GM12878 (cell line): ENCODE measurements at regions of chr5 and their contacts with region 1.

Region 1: GRCh38 chr5:57650360-57651069 is 167.9 kb upstream of the ACTBL2 start:
- DNase-seq: peak; percentile 16
- ATAC-seq: peak; percentile 93
- H3K4me3 ChIP-seq: no peak overlapping the region
- H3K27ac ChIP-seq: no peak overlapping the region
- H3K4me1 ChIP-seq: no peaks in the 10 kb centered on the region
- H3K27me3 ChIP-seq: no peaks in the 10 kb centered on the region
- CTCF ChIP-seq: peak; percentile 71 to 77 (median 75)
- EP300 ChIP-seq: no peak
- POLR2A ChIP-seq: no peak
- RAD21 ChIP-seq: peak; percentile 59

Region 2: DNA sequence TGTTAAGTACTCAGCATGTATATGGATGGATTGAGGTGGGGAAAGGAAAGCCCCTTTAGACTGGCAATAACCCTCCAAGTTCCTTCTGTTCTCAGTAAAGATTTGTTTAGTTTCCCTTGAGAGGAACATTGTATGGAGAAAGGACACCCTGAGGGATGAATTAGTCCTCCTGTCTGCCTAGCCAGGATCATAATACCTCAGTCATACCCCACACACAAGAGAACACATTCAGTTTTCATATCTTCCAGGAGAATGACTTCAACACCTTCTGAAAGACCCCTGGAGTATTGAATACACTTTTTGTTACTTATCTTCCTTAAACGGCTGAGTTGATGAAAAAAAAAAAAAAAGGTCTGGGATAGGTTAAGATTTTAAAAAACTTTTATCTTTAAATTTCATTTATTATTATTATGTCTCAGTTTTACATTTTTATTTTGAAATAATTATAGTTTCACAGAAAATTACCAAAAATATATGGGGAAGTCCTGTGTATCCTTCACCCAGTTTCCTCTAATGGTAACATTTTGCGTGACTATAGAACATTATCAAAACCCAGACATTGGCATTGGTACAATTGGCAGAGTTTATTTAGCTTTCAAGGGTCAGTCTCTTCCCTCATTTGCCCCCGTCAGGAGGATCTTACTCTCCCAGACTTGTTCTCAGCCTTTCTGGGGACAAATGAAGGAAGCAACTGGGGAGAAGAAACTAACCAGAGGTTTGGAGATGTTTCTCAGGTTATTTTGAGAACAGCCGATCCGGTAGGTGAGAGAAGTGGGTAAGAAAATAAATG is 255.9 kb before region 1 on chr5:
- CTCF ChIA-PET with region 1: no interaction called
- POLR2A ChIA-PET with region 1: no interaction called
- RAD21 ChIA-PET with region 1: no interaction called
- SMC1A ChIA-PET with region 1: no interaction called
- in situ Hi-C with region 1: no loop called
- intact Hi-C with region 1: no loop called
- DNase-seq: no peak
- ATAC-seq: no peak
- H3K4me3 ChIP-seq: no peak overlapping the region
- H3K27ac ChIP-seq: no peak overlapping the region
- H3K4me1 ChIP-seq: no peaks in the 10 kb centered on the region
- H3K27me3 ChIP-seq: no peaks in the 10 kb centered on the region
- CTCF ChIP-seq: no peak
- EP300 ChIP-seq: no peak
- POLR2A ChIP-seq: no peak
- RAD21 ChIP-seq: no peak

Region 3: GRCh38 chr5:57635146-57635777 is 15.3 kb before region 1 on chr5:
- CTCF ChIA-PET with region 1: interaction called, 12 read pairs
- POLR2A ChIA-PET with region 1: no interaction called
- RAD21 ChIA-PET with region 1: no interaction called
- SMC1A ChIA-PET with region 1: interaction called, 4 read pairs
- in situ Hi-C with region 1: no loop called
- intact Hi-C with region 1: no loop called
- DNase-seq: no peak
- ATAC-seq: no peak
- H3K4me3 ChIP-seq: no peak overlapping the region
- H3K27ac ChIP-seq: no peak overlapping the region
- H3K4me1 ChIP-seq: no peaks in the 10 kb centered on the region
- H3K27me3 ChIP-seq: no peaks in the 10 kb centered on the region; a peak in 1 of 4 replicates
- CTCF ChIP-seq: no peak
- EP300 ChIP-seq: no peak
- POLR2A ChIP-seq: no peak
- RAD21 ChIP-seq: no peak

Region 4: DNA sequence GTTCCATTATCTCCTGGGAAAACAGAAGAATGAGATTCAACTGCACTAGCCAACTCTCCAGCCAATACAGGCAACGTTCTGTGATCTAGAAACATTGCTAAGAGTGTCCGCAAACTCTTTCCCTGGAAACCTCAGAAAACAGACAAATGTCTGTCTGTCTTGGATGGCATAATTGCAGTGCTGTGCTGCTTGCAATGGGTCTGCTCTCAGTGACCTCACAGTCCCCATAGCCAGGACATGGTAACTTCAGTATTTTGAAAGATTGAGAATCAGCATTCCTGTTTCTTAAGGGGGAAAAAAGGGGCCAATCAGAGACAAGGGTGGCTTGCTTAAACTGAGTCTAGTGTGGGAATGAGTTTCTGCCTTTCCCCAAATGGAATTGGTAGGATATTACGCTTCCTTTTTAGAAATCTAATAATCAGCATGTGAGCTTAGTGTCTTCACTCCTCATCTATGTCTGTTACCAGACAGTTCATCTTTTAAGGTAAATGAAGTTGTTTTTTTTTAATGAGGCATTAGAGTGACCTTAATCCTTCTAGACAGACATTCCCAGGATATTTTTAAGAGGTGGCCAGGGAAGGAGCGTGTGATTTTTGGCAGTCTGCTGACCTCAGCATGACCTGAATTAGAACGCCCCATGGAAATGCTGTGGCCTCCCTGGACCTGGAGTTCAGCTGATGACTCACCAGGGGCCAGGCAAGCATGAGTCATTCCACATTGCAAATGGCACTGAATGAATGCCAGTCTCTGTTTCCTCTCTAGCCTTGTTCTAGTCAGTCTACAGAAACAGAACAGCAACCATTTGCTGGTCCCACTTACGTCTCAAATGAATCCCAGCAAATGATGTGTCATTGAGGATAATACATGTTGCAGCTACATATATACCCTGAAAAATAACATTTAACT is 42.3 kb after region 1 on chr5:
- CTCF ChIA-PET with region 1: interaction called, 10 read pairs
- POLR2A ChIA-PET with region 1: no interaction called
- RAD21 ChIA-PET with region 1: no interaction called
- SMC1A ChIA-PET with region 1: no interaction called
- in situ Hi-C with region 1: no loop called
- intact Hi-C with region 1: no loop called
- DNase-seq: no peak
- ATAC-seq: peak; percentile 81
- H3K4me3 ChIP-seq: no peak overlapping the region
- H3K27ac ChIP-seq: no peak overlapping the region
- H3K4me1 ChIP-seq: no peaks in the 10 kb centered on the region
- H3K27me3 ChIP-seq: no peaks in the 10 kb centered on the region
- CTCF ChIP-seq: no peak
- EP300 ChIP-seq: no peak
- POLR2A ChIP-seq: no peak
- RAD21 ChIP-seq: no peak